Colonic mucosa (tissue), 4 donors: ENCODE measurements at regions of chr17 and their contacts with region 1.

Region 1: GRCh38 chr17:36682773-36683172 is 81.4 kb downstream of the MRM1 start:
- DNase-seq: no peak
- H3K4me3 ChIP-seq: no peak overlapping the region
- H3K27ac ChIP-seq: no peak overlapping the region
- H3K4me1 ChIP-seq: no peaks in the 10 kb centered on the region
- H3K27me3 ChIP-seq: no peaks in the 10 kb centered on the region
- CTCF ChIP-seq: no peak

Region 2: GRCh38 chr17:36661688-36662087 is 21.1 kb before region 1 on chr17:
- intact Hi-C with region 1: loop called (anchors 2 kb)
- DNase-seq: no peak
- H3K4me3 ChIP-seq: no peak overlapping the region
- H3K27ac ChIP-seq: no peak overlapping the region
- H3K4me1 ChIP-seq: no peaks in the 10 kb centered on the region
- H3K27me3 ChIP-seq: peaks cover 9% of the 10 kb centered on the region
- CTCF ChIP-seq: no peak